ENCODE measurements at regions of chr4 and their contacts with region 1.

Region 1: GRCh38 chr4:152220201-152220666 is 315.7 kb downstream of the FBXW7 start:
- DNase-seq: peak; percentile 72
- H3K4me3 Mint-ChIP-seq: no peak overlapping the region
- H3K27ac Mint-ChIP-seq: peak overlapping the region; percentile 41
- H3K4me1 Mint-ChIP-seq: peaks cover 29% of the 10 kb centered on the region
- H3K27me3 Mint-ChIP-seq: no peaks in the 10 kb centered on the region

Region 2: GRCh38 chr4:152197211-152197610 is 23.0 kb before region 1 on chr4:
- CTCF ChIA-PET with region 1: no interaction called
- intact Hi-C with region 1: no loop called
- DNase-seq: no peak
- H3K4me3 Mint-ChIP-seq: no peak overlapping the region
- H3K27ac Mint-ChIP-seq: no peak overlapping the region
- H3K4me1 Mint-ChIP-seq: peaks cover 2% of the 10 kb centered on the region
- H3K27me3 Mint-ChIP-seq: no peaks in the 10 kb centered on the region

Region 3: DNA sequence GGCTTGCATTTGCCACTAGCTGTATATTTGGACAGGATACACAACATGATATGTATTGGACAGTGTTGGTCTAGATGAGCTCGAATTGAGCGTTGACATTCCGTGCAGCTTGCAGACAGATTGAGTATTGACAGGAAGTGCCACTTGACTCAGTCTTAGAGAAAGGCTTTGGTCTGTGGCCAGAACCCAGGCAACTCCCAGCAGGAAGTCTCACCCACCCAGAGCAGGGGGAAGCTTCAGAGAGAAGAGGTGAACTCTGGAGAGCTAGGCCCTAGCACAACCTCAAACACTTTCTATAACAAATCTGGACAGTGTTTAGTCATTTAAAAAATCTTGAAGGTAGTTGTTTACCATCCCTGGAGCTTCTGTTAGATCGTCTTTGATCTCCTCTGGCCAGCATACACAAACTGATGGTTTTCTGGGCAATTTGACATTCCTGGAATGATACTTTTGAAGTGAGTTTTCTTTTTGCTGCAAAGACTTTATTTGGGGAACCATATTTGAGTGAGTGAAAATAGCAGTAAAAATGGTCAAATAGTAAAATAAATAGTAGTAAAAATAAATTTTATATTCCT is 35.3 kb after region 1 on chr4:
- CTCF ChIA-PET with region 1: no interaction called
- intact Hi-C with region 1: loop called (anchors 1 kb)
- DNase-seq: peak; percentile 81
- H3K4me3 Mint-ChIP-seq: no peak overlapping the region
- H3K27ac Mint-ChIP-seq: no peak overlapping the region
- H3K4me1 Mint-ChIP-seq: peaks cover 17% of the 10 kb centered on the region
- H3K27me3 Mint-ChIP-seq: no peaks in the 10 kb centered on the region

Measured in activated naive CD4-positive, alpha-beta T cell treated with anti-CD3 and anti-CD28 coated beads for 36 hours (primary cell).